Dorsolateral prefrontal cortex (tissue), 120 donors: ENCODE measurements at regions of chr17 and their contacts with region 1.

Region 1: GRCh38 chr17:44308320-44308818 is at the start of gene RUNDC3A:
- DNase-seq: peak; percentile 85 to 96 (median 92)
- H3K4me3 ChIP-seq: peak within 1 kb of the TSS; percentile 52 to 85 (median 75)
- H3K27ac ChIP-seq: peak within 1 kb of the TSS; percentile 71 to 98 (median 94)
- H3K27me3 ChIP-seq: no peaks in the 10 kb centered on the region
- CTCF ChIP-seq: peak in 12 of 56 donors; percentile 4 to 29 (median 16)
- total RNA-seq, gene RUNDC3A: 123 to 489 (median 370) TPM

Region 2: DNA sequence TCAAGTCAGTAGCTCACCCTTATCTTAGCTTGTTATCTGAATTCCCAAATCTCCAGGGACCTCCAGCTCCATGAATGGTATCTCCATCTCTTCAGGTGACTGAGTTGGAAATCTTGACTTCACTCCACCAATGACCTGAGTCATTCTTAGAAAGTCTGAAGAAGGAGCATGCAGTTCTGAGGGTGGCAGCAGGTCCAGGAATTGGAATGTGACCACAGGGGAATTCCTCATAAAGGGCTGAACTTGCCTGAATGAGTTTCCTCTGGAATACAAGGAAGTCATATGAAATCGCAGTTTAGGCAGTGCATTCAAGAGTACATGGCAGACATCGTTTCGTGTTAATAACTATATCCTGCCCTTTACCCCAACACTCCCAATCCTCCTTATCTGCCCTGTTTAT is 342.1 kb before region 1 on chr17:
- intact Hi-C with region 1: no loop called
- DNase-seq: no peak
- H3K4me3 ChIP-seq: no peak overlapping the region
- H3K27ac ChIP-seq: no peak overlapping the region
- H3K27me3 ChIP-seq: no peaks in the 10 kb centered on the region
- CTCF ChIP-seq: no peak

Region 3: DNA sequence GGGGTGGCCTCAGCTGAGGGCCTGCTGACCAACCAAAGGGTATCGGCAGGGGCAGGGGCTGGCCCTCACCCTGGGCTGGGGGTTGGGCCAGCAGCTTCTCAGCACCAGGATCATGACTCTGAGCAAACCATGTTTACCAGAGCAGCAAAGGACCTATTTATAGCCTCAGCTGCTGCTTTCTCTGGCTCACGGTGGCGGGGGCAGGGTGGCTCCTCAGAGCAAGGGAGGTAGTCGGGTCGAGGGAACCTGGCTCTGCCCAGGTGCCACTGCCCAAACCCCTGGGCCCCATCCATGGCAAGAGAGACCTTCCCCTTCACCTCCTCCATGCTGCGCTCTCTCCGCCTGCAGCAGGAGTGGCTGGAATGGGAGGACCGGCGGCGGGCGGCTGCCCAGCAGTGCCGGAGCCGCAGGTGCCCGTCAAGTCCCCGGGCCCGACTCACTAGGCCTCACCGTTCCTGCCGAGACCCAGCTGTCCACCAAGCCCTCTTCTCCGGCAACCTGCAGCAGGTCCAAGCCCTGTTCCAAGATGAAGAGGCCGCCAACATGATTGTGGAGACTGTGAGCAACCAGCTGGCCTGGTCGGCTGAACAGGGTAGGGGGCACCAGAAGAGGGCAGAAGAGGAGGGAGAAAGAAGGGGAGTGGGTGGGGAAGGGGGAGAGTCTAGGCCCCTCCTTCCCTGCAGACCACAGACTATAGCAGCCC is 137.7 kb before region 1 on chr17 and contains the start of gene ASB16:
- intact Hi-C with region 1: no loop called
- DNase-seq: peak in 2 of 10 donors; percentile 24 to 76
- H3K4me3 ChIP-seq: peak within 1 kb of the TSS in 34 of 59 donors; percentile 4 to 47 (median 22)
- H3K27ac ChIP-seq: peak within 1 kb of the TSS in 33 of 59 donors; percentile 2 to 87 (median 44)
- H3K27me3 ChIP-seq: no peaks in the 10 kb centered on the region
- CTCF ChIP-seq: no peak
- total RNA-seq, gene ASB16: 0.23 to 3.2 (median 0.64) TPM in 104 of 120 experiments, not detected in the others

Region 4: GRCh38 chr17:44218344-44219107 is 89.8 kb before region 1 on chr17:
- intact Hi-C with region 1: loop called (anchors 1 to 2 kb)
- DNase-seq: peak; percentile 68 to 91 (median 82)
- H3K4me3 ChIP-seq: peak overlapping the region; percentile 46 to 95 (median 88)
- H3K27ac ChIP-seq: peak overlapping the region; percentile 71 to 100 (median 99)
- H3K27me3 ChIP-seq: no peaks in the 10 kb centered on the region
- CTCF ChIP-seq: peak; percentile 31 to 83 (median 68)